Ovary (tissue), 10 donors: ENCODE measurements at regions of chr1 and their contacts with region 1.

Region 1: DNA sequence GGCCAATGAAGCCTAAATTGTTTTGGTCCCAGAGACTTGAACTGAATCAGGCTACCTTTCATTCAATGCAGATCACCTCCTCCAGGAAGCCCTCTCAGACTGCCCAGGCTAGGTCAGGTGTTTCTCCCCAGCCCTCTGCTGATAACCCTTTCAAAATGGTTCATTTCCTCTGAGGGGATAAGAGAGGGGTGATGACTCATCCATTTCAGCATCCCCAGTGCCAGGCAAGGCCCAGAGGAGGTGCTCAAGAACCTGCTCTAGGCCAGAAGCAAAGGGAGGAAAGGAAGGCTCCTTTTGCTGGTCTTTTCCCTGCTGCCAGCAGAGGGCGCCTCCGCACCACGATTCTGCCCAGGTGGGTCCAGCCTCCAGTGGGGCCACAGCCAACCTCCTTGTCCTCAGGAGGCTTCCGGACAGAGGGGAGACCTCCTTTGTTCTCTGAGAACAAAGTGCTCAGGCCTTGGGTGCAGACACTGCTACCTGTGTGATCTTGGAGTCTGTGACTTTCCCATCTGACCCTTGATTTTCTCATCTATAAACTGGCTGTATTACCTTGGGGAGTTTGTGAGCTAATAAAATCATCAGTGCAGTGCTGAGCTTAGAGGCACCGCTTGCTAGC is 45.3 kb upstream of the ARHGEF10L start:
- DNase-seq: peak; percentile 43 to 79 (median 68)
- H3K4me3 ChIP-seq: no peak overlapping the region
- H3K27ac ChIP-seq: no peak overlapping the region
- H3K4me1 ChIP-seq: no peaks in the 10 kb centered on the region
- H3K27me3 ChIP-seq: no peaks in the 10 kb centered on the region
- CTCF ChIP-seq: peak; percentile 57 to 69 (median 68)
- EP300 ChIP-seq: no peak
- POLR2A ChIP-seq: no peak

Region 2: DNA sequence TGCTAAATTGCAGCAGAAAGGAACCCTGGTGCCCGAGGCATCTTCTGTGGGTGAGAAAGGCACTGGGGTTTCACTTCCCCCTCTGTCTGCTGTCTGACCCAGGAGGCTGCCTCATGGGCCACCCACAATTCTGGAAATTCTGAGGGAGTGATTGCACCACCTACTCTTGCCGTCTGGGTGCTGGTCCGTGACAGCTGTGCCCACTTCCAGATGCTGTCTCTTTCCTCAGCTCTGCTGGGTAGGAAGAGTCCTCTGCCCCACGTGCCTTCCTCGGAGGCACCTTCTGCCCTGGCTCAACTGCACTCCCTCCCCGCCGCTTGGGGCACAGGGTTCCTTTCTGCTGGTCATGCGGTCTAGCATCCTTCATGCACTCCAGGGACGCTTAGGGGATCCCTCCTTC is 141.6 kb after region 1 on chr1:
- intact Hi-C with region 1: no loop called
- DNase-seq: no peak
- H3K4me3 ChIP-seq: no peak overlapping the region
- H3K27ac ChIP-seq: no peak overlapping the region
- H3K4me1 ChIP-seq: no peaks in the 10 kb centered on the region
- H3K27me3 ChIP-seq: no peaks in the 10 kb centered on the region
- CTCF ChIP-seq: no peak
- EP300 ChIP-seq: no peak
- POLR2A ChIP-seq: no peak

Region 3: DNA sequence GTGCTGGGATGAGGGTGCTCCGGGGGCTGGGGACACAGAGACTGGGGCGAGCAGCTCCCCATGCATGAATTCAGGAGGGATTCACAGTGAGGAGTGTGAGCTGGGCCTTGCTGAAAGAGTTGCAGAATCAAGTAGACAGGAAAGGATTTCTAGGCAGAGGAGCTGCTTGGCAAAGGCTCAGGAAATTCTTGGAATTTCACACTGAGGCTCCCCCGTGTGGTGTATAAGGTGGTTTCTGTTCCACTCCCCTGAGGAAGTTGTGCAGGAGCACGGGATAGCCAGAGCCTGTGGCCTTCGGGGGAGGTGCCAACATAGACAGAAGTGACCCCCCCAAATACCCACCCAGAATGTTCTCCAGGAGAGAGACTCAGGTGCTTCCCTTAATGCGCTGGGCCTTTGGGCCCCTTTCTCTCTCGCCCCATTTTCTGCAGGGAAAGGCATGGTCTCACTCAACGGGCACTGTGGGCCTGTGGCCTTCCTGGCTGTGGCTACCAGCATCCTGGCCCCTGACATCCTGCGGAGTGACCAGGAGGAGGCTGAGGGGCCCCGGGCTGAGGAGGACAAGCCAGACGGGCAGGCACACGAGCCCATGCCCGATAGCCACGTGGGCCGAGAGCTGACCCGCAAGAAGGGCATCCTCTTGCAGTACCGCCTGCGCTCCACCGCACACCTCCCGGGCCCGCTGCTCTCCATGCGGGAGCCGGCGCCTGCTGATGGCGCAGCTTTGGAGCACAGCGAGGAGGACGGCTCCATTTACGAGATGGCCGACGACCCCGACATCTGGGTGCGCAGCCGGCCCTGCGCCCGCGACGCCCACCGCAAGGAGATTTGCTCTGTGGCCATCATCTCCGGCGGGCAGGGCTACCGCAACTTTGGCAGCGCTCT is 202.4 kb after region 1 on chr1:
- intact Hi-C with region 1: loop called in 1 of 4 experiments (anchors 10 kb)
- DNase-seq: peak; percentile 46 to 66 (median 59)
- H3K4me3 ChIP-seq: no peak overlapping the region
- H3K27ac ChIP-seq: no peak overlapping the region
- H3K4me1 ChIP-seq: no peaks in the 10 kb centered on the region
- H3K27me3 ChIP-seq: no peaks in the 10 kb centered on the region
- CTCF ChIP-seq: peak in 1 of 3 donors; percentile 14
- EP300 ChIP-seq: no peak
- POLR2A ChIP-seq: no peak

Region 4: GRCh38 chr1:17826165-17826488 is 331.9 kb after region 1 on chr1:
- intact Hi-C with region 1: loop called in 1 of 4 experiments (anchors 10 kb)
- DNase-seq: no peak
- H3K4me3 ChIP-seq: no peak overlapping the region
- H3K27ac ChIP-seq: no peak overlapping the region
- H3K4me1 ChIP-seq: no peaks in the 10 kb centered on the region
- H3K27me3 ChIP-seq: no peaks in the 10 kb centered on the region
- CTCF ChIP-seq: no peak
- EP300 ChIP-seq: no peak
- POLR2A ChIP-seq: no peak